Astrocyte of the cerebellum (primary cell): ENCODE measurements at regions of chr3 and their contacts with region 1.

Region 1: DNA sequence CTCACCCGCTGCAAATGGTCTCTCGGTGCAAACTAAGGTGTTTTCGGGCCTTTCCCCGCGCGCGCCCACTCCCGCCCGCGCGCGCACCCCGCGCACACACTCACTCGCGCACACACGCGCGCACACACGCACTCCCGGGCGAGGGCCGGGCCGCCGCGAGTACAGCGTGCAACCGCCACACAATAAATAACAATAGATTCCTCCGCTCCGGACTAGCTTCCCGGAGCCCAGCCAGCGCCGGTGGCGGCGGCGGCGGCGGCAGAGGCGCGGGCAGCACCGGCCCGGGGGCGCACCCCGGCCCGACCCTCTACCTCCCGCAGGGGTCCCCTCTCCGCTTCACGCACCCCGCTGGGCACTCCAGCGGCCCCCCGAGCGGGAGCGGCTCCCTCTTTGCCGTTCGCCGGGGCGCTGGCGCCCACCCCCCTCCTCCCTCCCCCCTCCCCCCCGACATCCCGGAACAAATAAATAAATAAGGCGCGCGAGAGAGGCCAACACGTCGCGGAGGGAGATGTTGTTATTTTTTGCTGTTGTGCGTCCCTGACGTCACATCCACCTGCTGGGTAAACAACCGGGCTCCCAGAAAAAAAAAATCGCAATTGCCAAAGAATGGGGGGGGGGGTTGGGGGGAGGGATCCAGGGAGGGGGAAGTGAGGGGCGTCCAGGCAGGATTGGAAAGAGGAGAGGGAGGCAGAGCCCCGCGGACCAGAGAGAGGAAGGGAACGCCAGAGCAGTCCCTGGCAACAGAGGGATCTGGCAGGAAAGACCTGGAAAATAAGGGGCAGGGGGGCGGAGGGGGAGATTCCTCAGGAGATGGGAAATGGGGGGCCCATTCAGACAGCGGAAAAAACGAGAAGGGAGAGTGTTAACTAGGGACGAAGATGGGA is at the start of gene FOXP1:
- DNase-seq: no peak
- H3K4me3 ChIP-seq: peak within 1 kb of the TSS; percentile 84
- CTCF ChIP-seq: no peak

Region 2: DNA sequence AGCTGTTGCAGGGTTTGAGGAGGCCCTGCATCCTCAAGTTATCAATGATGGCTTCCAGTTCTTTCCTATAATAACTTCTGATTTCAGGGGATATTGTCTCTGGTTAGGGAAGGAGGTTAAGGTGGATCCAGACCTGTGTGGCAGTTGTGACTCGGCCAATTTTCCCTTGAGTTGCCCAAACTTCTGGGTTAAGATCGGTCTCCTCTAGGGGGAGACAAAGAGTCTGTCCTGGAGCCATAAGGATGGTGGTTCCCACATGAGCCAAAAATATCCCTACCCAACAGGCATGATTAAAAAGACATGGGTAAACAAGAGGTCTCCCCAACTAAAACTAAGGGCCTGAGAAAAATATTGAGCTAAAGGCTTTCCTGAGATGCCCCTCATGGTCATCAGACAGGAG is 1043.9 kb before region 1 on chr3:
- in situ Hi-C with region 1: loop called (anchors 5 kb)
- DNase-seq: no peak
- H3K4me3 ChIP-seq: no peak overlapping the region
- CTCF ChIP-seq: no peak

Region 3: DNA sequence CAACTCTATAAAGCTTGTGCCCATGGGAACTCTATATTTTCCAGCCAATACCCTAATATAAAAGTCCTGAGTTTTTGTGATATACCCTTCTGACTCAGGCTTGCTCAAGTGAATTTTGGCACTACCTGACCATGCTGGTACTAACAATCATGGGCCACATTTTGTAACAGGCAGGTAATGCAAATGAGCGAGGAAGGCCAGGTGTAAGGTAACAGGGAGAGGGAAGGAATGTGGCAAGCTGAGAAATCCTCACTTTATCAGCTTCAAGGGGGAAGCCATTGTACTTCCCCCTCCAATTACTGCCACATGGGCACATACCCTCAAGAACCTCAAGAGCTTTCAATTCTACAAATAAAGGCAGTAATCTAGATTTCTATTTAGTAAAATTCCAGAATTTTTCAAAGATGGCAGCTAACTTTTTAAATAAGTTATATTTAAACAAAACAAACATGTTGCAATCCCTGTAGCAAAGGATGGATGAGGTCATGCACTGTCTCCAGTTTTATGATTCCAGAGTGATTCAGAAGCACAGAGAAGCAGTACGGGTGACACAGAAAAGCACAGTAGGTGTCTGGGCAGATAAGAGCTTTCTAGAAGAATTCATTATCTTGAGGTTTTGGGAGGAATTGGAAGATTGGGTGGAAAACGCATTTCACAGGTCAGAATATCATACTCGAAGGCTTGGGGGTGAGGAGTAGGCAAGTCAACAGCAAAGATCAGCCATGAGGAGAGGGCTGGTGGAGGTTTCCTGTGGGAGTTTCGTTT is 87.9 kb before region 1 on chr3:
- in situ Hi-C with region 1: loop called (anchors 5 kb)
- DNase-seq: no peak
- H3K4me3 ChIP-seq: no peak overlapping the region
- CTCF ChIP-seq: no peak

Region 4: DNA sequence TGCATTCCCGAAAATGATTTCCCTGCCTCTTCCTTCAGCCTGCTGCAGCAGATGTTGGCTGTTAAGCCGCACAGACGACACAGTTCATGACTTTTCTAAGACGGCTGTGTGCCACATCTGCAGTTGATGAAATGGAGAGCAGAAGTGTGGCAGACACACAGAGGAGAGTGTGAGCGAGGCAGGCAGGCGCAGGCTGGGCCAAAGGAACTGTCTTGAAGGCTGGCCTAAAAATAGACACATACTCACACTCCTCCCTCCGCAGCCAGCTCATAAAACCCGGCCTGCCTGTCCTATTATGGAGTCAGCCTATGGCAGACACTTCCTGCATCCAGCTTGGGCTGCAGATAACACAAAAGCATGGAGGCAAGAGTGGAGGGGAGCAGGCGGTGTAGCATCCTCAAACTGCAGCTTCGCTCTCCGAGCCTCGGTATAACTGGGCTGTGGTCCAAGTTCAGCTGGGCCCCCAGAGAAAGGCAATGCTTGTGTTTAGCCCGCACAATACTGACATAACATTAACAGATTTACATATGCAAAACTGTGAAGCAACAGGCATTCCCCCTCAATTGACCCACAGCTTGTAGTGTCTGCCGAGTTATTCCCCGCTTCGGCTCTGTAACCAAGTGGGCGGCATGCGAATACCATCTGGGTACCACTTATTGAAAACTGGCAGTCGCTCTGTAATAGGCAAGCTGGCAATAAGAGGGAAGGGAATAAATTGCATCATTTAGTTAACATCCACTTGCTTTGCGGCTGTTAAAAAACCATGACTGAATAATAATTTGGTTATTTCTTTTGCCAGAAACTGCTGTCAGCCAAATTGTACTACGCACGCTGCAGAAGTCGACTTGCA is 41.1 kb before region 1 on chr3:
- in situ Hi-C with region 1: loop called (anchors 5 kb)
- DNase-seq: peak; percentile 57
- H3K4me3 ChIP-seq: no peak overlapping the region
- CTCF ChIP-seq: no peak

Region 5: GRCh38 chr3:71629711-71630110 is 45.9 kb after region 1 on chr3:
- in situ Hi-C with region 1: no loop called
- DNase-seq: no peak
- H3K4me3 ChIP-seq: no peak overlapping the region
- CTCF ChIP-seq: no peak

Region 6: GRCh38 chr3:71725279-71725991 is 141.6 kb after region 1 on chr3 and contains the start of gene EIF4E3:
- in situ Hi-C with region 1: no loop called
- DNase-seq: no peak
- H3K4me3 ChIP-seq: peak within 1 kb of the TSS; percentile 62
- CTCF ChIP-seq: no peak

Region 7: DNA sequence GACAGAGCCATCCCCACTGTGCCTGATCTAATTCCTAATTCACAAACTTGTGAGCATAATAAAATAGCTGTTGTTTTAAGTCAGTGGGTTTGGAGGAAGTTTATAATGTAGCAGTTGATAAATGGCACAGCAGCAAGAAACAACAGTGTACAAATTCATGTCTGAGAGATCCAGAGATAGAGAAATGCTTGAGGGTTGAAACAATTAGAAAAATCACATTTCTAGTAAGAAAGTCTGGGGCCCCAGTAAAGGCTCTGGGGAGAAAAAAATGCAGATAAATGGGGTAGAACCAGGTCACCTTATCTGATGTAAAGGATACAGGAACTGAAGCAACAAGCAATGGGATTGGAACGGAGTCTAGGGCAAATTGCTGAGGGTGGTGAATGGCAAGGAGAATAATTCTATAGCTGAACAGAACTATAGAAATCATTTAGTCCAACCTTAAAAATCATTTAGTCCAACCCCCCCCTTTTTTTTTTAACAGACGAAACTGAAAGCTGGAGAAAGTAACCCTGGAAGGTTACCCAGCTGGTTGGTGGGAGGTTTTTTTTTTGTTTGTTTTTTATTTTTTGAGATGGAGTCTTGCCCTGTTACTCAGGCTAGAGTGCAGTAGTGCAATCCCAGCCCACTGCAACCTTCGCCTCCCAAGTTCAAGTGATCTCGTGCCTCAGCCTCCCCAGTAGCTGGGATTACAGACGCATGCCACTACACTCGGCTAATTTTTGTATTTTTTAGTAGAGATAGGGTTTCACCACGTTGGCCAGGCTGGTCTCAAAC is 1278.7 kb after region 1 on chr3:
- in situ Hi-C with region 1: no loop called
- DNase-seq: no peak
- H3K4me3 ChIP-seq: no peak overlapping the region
- CTCF ChIP-seq: no peak